CD4-positive, alpha-beta memory T cell (primary cell): ENCODE measurements at regions of chr17 and their contacts with region 1.

Region 1: DNA sequence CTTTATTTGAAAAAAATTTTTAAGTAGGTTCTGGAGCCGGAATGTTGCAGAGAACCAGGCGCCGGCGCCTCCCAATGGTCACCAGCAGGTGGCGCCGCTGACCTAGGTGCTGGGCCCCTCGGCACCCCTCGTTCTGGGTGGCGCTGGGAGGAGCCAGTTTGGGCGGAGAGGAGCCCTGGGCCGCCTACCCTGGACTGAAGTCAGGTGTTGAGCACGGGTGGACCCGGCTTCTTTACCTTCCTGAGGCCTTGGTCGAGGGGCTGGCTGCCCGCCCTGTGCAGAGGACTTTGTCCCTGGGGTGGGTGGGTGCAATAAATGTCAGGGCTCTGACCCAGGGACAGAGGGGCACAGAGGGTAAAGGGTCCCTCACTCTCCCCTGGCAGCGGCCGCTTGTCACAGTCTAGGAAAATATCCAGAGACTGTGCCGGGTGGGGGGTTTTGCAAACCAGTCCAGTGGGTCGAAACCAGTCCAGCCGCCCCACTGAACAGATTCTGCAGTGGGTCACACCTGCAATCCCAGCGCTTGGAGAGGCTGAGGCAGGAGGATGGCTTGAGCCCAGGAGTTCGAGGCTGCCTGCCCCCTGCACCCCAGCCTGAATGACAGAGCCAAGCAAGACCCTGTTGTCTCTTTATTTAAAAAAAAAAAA is 30.1 kb upstream of the TNFRSF13B start:
- DNase-seq: peak; percentile 62 to 76 (median 70)
- H3K4me3 ChIP-seq: no peak overlapping the region
- H3K4me3 Mint-ChIP-seq: no peak overlapping the region
- H3K27ac ChIP-seq: no peak overlapping the region
- H3K27ac Mint-ChIP-seq: no peak overlapping the region
- H3K4me1 ChIP-seq: no peaks in the 10 kb centered on the region
- H3K4me1 Mint-ChIP-seq: peaks cover 1 to 4% (median 3%) of the 10 kb centered on the region in 4 donors
- H3K27me3 ChIP-seq: no peaks in the 10 kb centered on the region
- H3K27me3 Mint-ChIP-seq: no peaks in the 10 kb centered on the region

Region 2: GRCh38 chr17:17063546-17064122 is 61.6 kb after region 1 on chr17:
- CTCF ChIA-PET with region 1: no interaction called
- POLR2A ChIA-PET with region 1: no interaction called
- intact Hi-C with region 1: no loop called
- DNase-seq: peak in 2 of 5 donors; percentile 3 to 59
- H3K4me3 ChIP-seq: no peak overlapping the region
- H3K4me3 Mint-ChIP-seq: peak overlapping the region in 3 of 8 donors; percentile 26 to 67 (median 60)
- H3K27ac ChIP-seq: no peak overlapping the region
- H3K27ac Mint-ChIP-seq: peak overlapping the region; percentile 1 to 90 (median 78)
- H3K4me1 ChIP-seq: peaks cover 56% of the 10 kb centered on the region
- H3K4me1 Mint-ChIP-seq: peaks cover 47 to 71% (median 61%) of the 10 kb centered on the region in 4 donors
- H3K27me3 ChIP-seq: no peaks in the 10 kb centered on the region
- H3K27me3 Mint-ChIP-seq: no peaks in the 10 kb centered on the region

Region 3: GRCh38 chr17:17119533-17119932 is 117.5 kb after region 1 on chr17:
- CTCF ChIA-PET with region 1: interaction called, 10 read pairs
- POLR2A ChIA-PET with region 1: no interaction called
- intact Hi-C with region 1: no loop called
- DNase-seq: peak; percentile 69 to 93 (median 81)
- H3K4me3 ChIP-seq: no peak overlapping the region
- H3K4me3 Mint-ChIP-seq: peak overlapping the region; percentile 10 to 79 (median 66)
- H3K27ac ChIP-seq: peak overlapping the region; percentile 66
- H3K27ac Mint-ChIP-seq: peak overlapping the region; percentile 93 to 96 (median 95)
- H3K4me1 ChIP-seq: peaks cover 93% of the 10 kb centered on the region
- H3K4me1 Mint-ChIP-seq: peaks cover 62 to 95% (median 84%) of the 10 kb centered on the region in 4 donors
- H3K27me3 ChIP-seq: no peaks in the 10 kb centered on the region
- H3K27me3 Mint-ChIP-seq: no peaks in the 10 kb centered on the region

Region 4: GRCh38 chr17:17313350-17313991 is 311.5 kb after region 1 on chr17:
- CTCF ChIA-PET with region 1: interaction called, 25 read pairs
- POLR2A ChIA-PET with region 1: no interaction called
- intact Hi-C with region 1: no loop called
- DNase-seq: peak; percentile 71 to 77 (median 76)
- H3K4me3 ChIP-seq: no peak overlapping the region
- H3K4me3 Mint-ChIP-seq: peak overlapping the region in 1 of 8 donors; percentile 15
- H3K27ac ChIP-seq: no peak overlapping the region
- H3K27ac Mint-ChIP-seq: peak overlapping the region in 3 of 7 donors; percentile 66 to 70 (median 67)
- H3K4me1 ChIP-seq: peaks cover 3% of the 10 kb centered on the region
- H3K4me1 Mint-ChIP-seq: peaks cover 4 to 7% (median 6%) of the 10 kb centered on the region in 4 donors
- H3K27me3 ChIP-seq: no peaks in the 10 kb centered on the region
- H3K27me3 Mint-ChIP-seq: no peaks in the 10 kb centered on the region

Region 5: GRCh38 chr17:17641621-17642409 is 639.8 kb after region 1 on chr17:
- CTCF ChIA-PET with region 1: no interaction called
- POLR2A ChIA-PET with region 1: no interaction called
- intact Hi-C with region 1: loop called (anchors 10 kb)
- DNase-seq: peak; percentile 67 to 74 (median 72)
- H3K4me3 ChIP-seq: no peak overlapping the region
- H3K4me3 Mint-ChIP-seq: no peak overlapping the region
- H3K27ac ChIP-seq: no peak overlapping the region
- H3K27ac Mint-ChIP-seq: peak overlapping the region in 1 of 7 donors; percentile 27
- H3K4me1 ChIP-seq: no peaks in the 10 kb centered on the region
- H3K4me1 Mint-ChIP-seq: no peaks in the 10 kb centered on the region
- H3K27me3 ChIP-seq: no peaks in the 10 kb centered on the region
- H3K27me3 Mint-ChIP-seq: peaks cover 6% of the 10 kb centered on the region in 2 donors